Psoas muscle (tissue), 8 donors: ENCODE measurements at regions of chr11 and their contacts with region 1.

Region 1: GRCh38 chr11:86955361-86956120 is at the start of gene FZD4:
- DNase-seq: peak; percentile 95 to 96
- ATAC-seq: peak; percentile 83 to 95 (median 88)
- H3K4me3 ChIP-seq: peak within 1 kb of the TSS; percentile 96
- H3K27ac ChIP-seq: peak within 1 kb of the TSS; percentile 95
- H3K4me1 ChIP-seq: peaks cover 38% of the 10 kb centered on the region
- H3K27me3 ChIP-seq: no peaks in the 10 kb centered on the region
- CTCF ChIP-seq: peak; percentile 12
- total RNA-seq, gene FZD4: 12.3 to 158 (median 30.2) TPM

Region 2: GRCh38 chr11:86983021-86983488 is 27.5 kb after region 1 on chr11:
- intact Hi-C with region 1: loop called in 1 of 2 experiments (anchors 2 kb)
- DNase-seq: peak; percentile 71 to 88
- ATAC-seq: peak; percentile 88 to 93 (median 90)
- H3K4me3 ChIP-seq: peak overlapping the region; percentile 20
- H3K27ac ChIP-seq: peak overlapping the region; percentile 71
- H3K4me1 ChIP-seq: peaks cover 54% of the 10 kb centered on the region
- H3K27me3 ChIP-seq: no peaks in the 10 kb centered on the region
- CTCF ChIP-seq: no peak

Region 3: GRCh38 chr11:87076260-87076783 is 120.8 kb after region 1 on chr11:
- intact Hi-C with region 1: no loop called
- DNase-seq: no peak
- ATAC-seq: peak in 1 of 4 donors; percentile 17
- H3K4me3 ChIP-seq: no peak overlapping the region
- H3K27ac ChIP-seq: no peak overlapping the region
- H3K4me1 ChIP-seq: no peaks in the 10 kb centered on the region
- H3K27me3 ChIP-seq: no peaks in the 10 kb centered on the region
- CTCF ChIP-seq: no peak

Region 4: DNA sequence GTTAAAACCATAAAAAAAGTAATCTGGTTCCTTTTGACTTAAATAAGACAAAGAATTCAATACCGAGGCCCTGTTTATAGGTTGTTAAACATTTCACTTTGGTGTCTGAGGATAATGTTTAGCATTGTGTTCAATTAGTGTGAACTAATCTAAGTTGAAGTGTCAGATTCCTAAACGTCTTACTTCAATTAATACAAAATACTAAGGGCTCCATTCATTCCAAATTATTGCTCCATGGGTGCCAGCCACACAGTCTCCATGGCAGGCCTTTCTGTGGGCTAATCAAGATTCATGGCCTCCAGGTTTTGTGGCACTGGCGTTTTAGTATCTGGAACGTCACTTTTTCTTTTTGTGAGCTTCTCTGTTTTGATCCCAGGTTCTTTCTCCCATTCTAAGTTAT is 171.6 kb after region 1 on chr11:
- intact Hi-C with region 1: no loop called
- DNase-seq: no peak
- ATAC-seq: no peak
- H3K4me3 ChIP-seq: no peak overlapping the region
- H3K27ac ChIP-seq: no peak overlapping the region
- H3K4me1 ChIP-seq: peaks cover 6% of the 10 kb centered on the region
- H3K27me3 ChIP-seq: no peaks in the 10 kb centered on the region
- CTCF ChIP-seq: no peak